MCF 10A (cell line): ENCODE measurements at regions of chr7 and their contacts with region 1.

Region 1: GRCh38 chr7:18978108-18978495 is 139.3 kb downstream of the TWIST1 start:
- DNase-seq: peak; percentile 92
- H3K4me3 Mint-ChIP-seq: peak overlapping the region; percentile 39
- H3K27ac Mint-ChIP-seq: peak overlapping the region; percentile 73
- H3K4me1 Mint-ChIP-seq: peaks cover 58% of the 10 kb centered on the region
- H3K27me3 Mint-ChIP-seq: no peaks in the 10 kb centered on the region
- CTCF ChIP-seq: no peak

Region 2: DNA sequence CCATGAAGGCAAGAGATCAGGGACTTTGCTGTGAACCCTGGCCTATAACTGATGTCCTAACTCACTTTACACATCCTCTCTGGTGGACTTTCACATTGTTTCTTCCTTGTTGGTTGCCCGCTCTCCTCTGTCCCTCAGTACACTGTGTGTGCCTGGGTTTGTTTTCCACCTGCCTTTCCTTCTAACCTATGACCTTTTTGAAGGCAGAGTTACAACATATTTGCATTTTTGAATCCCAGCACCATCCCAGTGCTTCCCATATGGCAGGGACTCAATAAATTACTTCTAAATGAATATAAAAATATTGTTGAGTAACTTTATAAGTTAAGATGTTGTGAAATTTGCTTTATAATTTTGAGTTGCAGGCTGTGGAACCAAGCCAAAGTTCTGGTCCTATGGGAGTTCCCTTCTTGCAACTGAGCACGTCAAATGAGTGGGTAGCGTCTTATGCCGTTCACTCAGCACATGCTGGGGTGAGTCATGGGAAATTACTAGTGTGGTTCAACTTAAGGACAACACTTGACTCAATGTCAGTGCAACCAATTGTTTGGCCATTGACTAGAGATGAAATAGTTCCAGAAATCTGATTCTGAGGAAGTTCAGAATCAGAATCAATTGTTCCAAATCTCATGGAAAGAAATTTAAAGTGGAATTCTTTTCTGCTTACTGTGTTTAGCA is 111.6 kb before region 1 on chr7:
- CTCF ChIA-PET with region 1: no interaction called
- POLR2A ChIA-PET with region 1: interaction called, 7 read pairs
- intact Hi-C with region 1: loop called (anchors 2 kb)
- DNase-seq: peak; percentile 99
- H3K4me3 Mint-ChIP-seq: no peak overlapping the region
- H3K27ac Mint-ChIP-seq: peak overlapping the region; percentile 78
- H3K4me1 Mint-ChIP-seq: peaks cover 41% of the 10 kb centered on the region
- H3K27me3 Mint-ChIP-seq: no peaks in the 10 kb centered on the region
- CTCF ChIP-seq: no peak